Activated naive CD4-positive, alpha-beta T cell treated with anti-CD3 and anti-CD28 coated beads, Interleukin-2, amount 10 ng/mL, durations not matched to agents 7 days and 5 days (primary cell): ENCODE measurements at regions of chr1 and their contacts with region 1.

Region 1: GRCh38 chr1:62746085-62746808 is 37.7 kb upstream of the ATG4C start:
- DNase-seq: no peak
- H3K4me3 Mint-ChIP-seq: no peak overlapping the region
- H3K27ac Mint-ChIP-seq: no peak overlapping the region
- H3K4me1 Mint-ChIP-seq: no peaks in the 10 kb centered on the region
- H3K27me3 Mint-ChIP-seq: peaks cover 10% of the 10 kb centered on the region

Region 2: GRCh38 chr1:62175568-62176179 is 570.6 kb before region 1 on chr1:
- CTCF ChIA-PET with region 1: interaction called, 12 read pairs
- DNase-seq: peak; percentile 60
- H3K4me3 Mint-ChIP-seq: no peak overlapping the region
- H3K27ac Mint-ChIP-seq: no peak overlapping the region
- H3K4me1 Mint-ChIP-seq: no peaks in the 10 kb centered on the region
- H3K27me3 Mint-ChIP-seq: peaks cover 4% of the 10 kb centered on the region

Region 3: GRCh38 chr1:62508187-62508758 is 238.0 kb before region 1 on chr1:
- CTCF ChIA-PET with region 1: interaction called, 50 read pairs
- DNase-seq: no peak
- H3K4me3 Mint-ChIP-seq: no peak overlapping the region
- H3K27ac Mint-ChIP-seq: no peak overlapping the region
- H3K4me1 Mint-ChIP-seq: no peaks in the 10 kb centered on the region
- H3K27me3 Mint-ChIP-seq: no peaks in the 10 kb centered on the region

Region 4: GRCh38 chr1:62722796-62723195 is 23.5 kb before region 1 on chr1:
- CTCF ChIA-PET with region 1: interaction called, 10 read pairs
- DNase-seq: no peak
- H3K4me3 Mint-ChIP-seq: no peak overlapping the region
- H3K27ac Mint-ChIP-seq: no peak overlapping the region
- H3K4me1 Mint-ChIP-seq: peaks cover 3% of the 10 kb centered on the region
- H3K27me3 Mint-ChIP-seq: peaks cover 15% of the 10 kb centered on the region

Region 5: DNA sequence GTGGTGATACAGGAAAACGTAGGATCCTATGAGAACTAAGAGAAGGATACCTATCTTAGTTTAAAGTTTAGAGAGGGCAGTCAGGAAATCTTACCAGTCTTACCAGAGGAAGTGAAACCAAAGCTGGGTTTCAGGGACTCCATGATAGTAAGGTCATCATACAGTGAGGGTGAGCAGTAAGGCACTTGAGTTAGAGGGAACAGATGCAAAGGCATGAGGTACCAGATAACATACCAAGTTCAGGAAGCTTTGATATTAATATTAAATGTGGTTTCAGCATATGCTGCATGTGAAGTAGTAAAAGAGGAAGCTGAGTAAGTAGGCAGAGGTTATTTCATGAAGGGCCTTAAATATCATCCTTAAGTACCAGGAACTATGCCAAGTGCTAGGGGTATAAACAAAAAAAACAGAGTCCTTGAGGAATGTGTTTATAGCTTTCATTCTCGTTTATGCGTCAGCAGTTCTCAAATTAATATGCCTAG is 54.6 kb after region 1 on chr1:
- CTCF ChIA-PET with region 1: no interaction called
- DNase-seq: no peak
- H3K4me3 Mint-ChIP-seq: no peak overlapping the region
- H3K27ac Mint-ChIP-seq: no peak overlapping the region
- H3K4me1 Mint-ChIP-seq: peaks cover 15% of the 10 kb centered on the region
- H3K27me3 Mint-ChIP-seq: no peaks in the 10 kb centered on the region

Region 6: GRCh38 chr1:62870148-62870547 is 123.9 kb after region 1 on chr1:
- CTCF ChIA-PET with region 1: no interaction called
- DNase-seq: no peak
- H3K4me3 Mint-ChIP-seq: no peak overlapping the region
- H3K27ac Mint-ChIP-seq: no peak overlapping the region
- H3K4me1 Mint-ChIP-seq: no peaks in the 10 kb centered on the region
- H3K27me3 Mint-ChIP-seq: peaks cover 8% of the 10 kb centered on the region